ENCODE measurements at regions of chr10 and their contacts with region 1.

Region 1: GRCh38 chr10:28939281-28940157 is 262.2 kb downstream of the BAMBI start:
- DNase-seq: peak; percentile 89
- H3K4me3 Mint-ChIP-seq: peak overlapping the region; percentile 66
- H3K27ac Mint-ChIP-seq: peak overlapping the region; percentile 90
- H3K4me1 Mint-ChIP-seq: peaks cover 55% of the 10 kb centered on the region
- H3K27me3 Mint-ChIP-seq: no peaks in the 10 kb centered on the region
- CTCF ChIP-seq: peak; percentile 52

Region 2: GRCh38 chr10:28676968-28677887 is 262.3 kb before region 1 on chr10 and contains the start of gene BAMBI:
- CTCF ChIA-PET with region 1: interaction called, 4 read pairs
- intact Hi-C with region 1: loop called (anchors 5 kb)
- DNase-seq: peak; percentile 97
- H3K4me3 Mint-ChIP-seq: peak within 1 kb of the TSS; percentile 88
- H3K27ac Mint-ChIP-seq: peak within 1 kb of the TSS; percentile 84
- H3K4me1 Mint-ChIP-seq: peaks cover 23% of the 10 kb centered on the region
- H3K27me3 Mint-ChIP-seq: peaks cover 13% of the 10 kb centered on the region
- CTCF ChIP-seq: peak; percentile 61
- total RNA-seq, gene BAMBI: 33.0 and 42.2 TPM in 2 replicates

Region 3: DNA sequence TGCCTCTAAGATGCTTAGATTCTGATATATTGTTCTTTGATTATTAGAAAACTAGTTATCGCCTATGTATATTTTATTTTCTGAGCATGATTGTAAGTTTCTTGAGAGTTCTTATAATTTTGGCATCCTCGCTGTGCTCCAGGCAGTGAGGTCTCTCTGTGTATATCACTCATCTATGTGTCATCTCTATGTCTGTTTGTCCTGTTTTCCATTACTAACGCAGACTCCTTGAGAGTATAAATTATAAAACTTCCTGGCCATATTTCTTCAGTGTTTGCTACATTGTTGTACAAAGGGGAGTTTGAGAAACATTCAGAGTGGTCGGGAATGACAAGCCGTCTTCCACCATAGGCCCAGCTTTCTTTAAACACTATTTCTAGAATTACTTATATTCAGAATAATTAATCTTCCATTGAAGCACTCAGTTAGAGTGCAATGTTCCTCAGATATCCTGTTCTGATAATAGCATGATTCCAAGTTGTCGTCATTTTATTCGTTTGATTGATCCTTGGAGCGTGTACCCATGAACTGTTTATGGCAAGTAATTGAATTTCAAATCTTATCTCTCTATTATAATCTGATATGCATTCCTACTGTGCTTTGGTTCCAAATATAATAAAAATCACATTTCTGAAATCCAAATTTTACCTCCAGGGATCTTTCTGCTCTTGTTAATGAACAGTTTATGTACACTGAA is 55.6 kb before region 1 on chr10:
- CTCF ChIA-PET with region 1: no interaction called
- intact Hi-C with region 1: loop called (anchors 1 kb)
- DNase-seq: no peak
- H3K4me3 Mint-ChIP-seq: peak overlapping the region; percentile 26
- H3K27ac Mint-ChIP-seq: peak overlapping the region; percentile 82
- H3K4me1 Mint-ChIP-seq: peaks cover 47% of the 10 kb centered on the region
- H3K27me3 Mint-ChIP-seq: no peaks in the 10 kb centered on the region
- CTCF ChIP-seq: no peak

Region 4: DNA sequence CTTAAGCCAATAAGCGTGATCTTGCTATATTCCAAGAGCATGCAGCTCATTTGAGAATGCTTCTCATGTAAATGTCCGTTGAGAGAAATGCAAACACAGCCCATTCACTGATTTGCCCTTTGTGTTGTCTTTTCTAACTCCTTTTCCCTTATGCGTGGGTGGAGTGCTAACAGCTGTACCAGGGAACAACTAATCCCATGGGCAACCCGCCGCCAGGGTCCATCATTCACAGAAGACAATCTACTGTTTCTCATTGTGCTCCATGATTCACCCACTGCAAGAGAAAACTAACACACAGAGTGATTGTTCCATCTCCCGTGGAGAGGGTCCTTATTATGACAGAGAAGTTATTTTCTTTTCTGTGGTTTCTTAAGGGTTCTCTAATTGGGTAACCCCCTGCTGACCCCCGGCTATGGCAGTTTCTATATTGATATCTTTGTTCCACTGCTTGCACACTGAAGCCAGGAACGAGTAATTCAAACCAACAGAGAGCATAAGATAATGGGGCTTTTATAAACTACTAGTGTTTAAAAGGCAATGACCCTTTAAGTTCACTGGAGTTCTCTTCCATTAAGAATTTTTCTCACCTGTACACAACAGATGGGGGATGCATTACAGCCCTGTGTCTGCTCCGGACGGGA is 36.5 kb after region 1 on chr10:
- CTCF ChIA-PET with region 1: no interaction called
- intact Hi-C with region 1: loop called (anchors 5 kb)
- DNase-seq: peak; percentile 25
- H3K4me3 Mint-ChIP-seq: no peak overlapping the region
- H3K27ac Mint-ChIP-seq: no peak overlapping the region
- H3K4me1 Mint-ChIP-seq: peaks cover 16% of the 10 kb centered on the region
- H3K27me3 Mint-ChIP-seq: no peaks in the 10 kb centered on the region
- CTCF ChIP-seq: no peak

Region 5: DNA sequence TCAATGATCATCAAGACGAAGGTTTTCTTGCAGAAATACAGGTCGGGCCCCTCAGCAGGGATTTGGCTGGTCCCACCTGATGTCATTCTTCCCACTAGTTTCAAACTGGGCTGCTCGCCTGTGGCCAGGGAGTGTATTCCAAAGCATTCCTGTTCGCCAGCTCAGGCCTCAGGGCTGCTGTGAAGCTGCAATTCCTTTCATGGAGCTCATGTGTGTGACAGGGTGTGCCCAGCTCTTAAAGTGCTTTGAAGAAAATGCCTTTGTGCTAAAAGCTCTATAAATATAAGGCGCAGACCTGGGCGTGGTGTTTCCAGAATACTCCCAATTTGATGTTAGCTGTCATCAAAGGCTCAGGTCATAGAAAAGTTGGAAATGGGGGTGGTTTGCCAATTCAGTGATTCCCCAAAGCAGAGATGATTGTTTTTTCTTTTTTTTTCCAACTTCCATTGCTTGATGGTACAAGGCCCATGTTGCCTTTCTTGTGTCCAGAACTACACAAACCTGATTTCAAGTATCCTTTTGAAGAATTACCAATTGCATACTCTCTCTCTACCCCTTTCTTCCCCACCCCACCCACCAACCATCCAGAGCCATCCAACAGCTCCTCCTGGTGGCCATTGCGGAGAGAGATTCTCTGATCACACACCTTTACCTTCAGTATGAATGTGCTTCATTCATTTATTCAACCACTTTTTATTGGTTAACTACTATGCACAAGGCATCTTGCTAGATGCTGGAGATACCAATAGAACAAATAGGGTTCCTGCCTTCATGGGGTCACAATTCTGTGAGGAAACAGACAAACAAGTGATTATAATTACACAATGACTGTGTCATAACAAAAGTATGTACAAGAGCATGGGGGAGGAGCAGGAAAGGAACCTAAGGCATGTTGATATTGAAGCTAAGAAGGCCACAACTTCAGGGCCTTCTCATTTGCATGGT is 52.1 kb after region 1 on chr10:
- CTCF ChIA-PET with region 1: interaction called, 16 read pairs
- intact Hi-C with region 1: loop called (anchors 2 kb)
- DNase-seq: peak; percentile 74
- H3K4me3 Mint-ChIP-seq: no peak overlapping the region
- H3K27ac Mint-ChIP-seq: peak overlapping the region; percentile 45
- H3K4me1 Mint-ChIP-seq: peaks cover 19% of the 10 kb centered on the region
- H3K27me3 Mint-ChIP-seq: no peaks in the 10 kb centered on the region
- CTCF ChIP-seq: peak; percentile 65

Region 6: GRCh38 chr10:29033311-29033940 is 93.9 kb after region 1 on chr10:
- CTCF ChIA-PET with region 1: no interaction called
- intact Hi-C with region 1: no loop called
- DNase-seq: no peak
- H3K4me3 Mint-ChIP-seq: no peak overlapping the region
- H3K27ac Mint-ChIP-seq: no peak overlapping the region
- H3K4me1 Mint-ChIP-seq: no peaks in the 10 kb centered on the region
- H3K27me3 Mint-ChIP-seq: no peaks in the 10 kb centered on the region
- CTCF ChIP-seq: no peak

Measured in Calu3 (cell line).